HCT116 (cell line): ENCODE measurements at regions of chr9 and their contacts with region 1.

Region 1: GRCh38 chr9:35923927-35924763 is 14.9 kb downstream of the SPAAR start:
- DNase-seq: peak; percentile 44
- ATAC-seq: peak; percentile 88
- H3K4me3 ChIP-seq: peak overlapping the region in 1 of 2 experiments; percentile 31; a peak in 2 of 4 replicates
- H3K27ac ChIP-seq: peak overlapping the region; percentile 46; the same call in 1 of the 2 replicates
- H3K4me1 ChIP-seq: peaks cover 14 to 20% of the 10 kb centered on the region in 2 experiments
- H3K27me3 ChIP-seq: no peaks in the 10 kb centered on the region
- CTCF ChIP-seq: no peak
- POLR2A ChIP-seq: no peak
- RAD21 ChIP-seq: no peak

Region 2: DNA sequence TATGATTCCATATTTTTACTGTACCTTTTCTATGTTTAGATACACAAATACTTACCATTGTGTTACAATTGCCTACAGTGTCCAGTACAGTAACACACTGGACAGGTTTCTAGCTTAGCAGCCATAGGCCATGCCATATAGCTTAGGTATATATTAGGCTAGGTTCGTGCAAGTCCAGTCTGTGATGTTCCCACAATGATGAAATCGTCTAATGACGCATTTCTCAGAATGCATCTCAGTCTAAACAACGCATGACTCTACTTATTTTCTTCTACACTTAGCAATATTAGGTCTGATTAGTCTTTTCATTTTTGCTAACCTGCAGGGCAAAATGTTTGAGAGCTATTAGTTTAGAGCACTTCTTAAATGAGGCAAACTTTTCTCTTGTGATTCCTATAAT is 11.1 kb after region 1 on chr9:
- CTCF ChIA-PET with region 1: no interaction called
- POLR2A ChIA-PET with region 1: no interaction called
- RAD21 ChIA-PET with region 1: no interaction called
- intact Hi-C with region 1: no loop called
- DNase-seq: no peak
- ATAC-seq: no peak
- H3K4me3 ChIP-seq: no peak overlapping the region
- H3K27ac ChIP-seq: no peak overlapping the region
- H3K4me1 ChIP-seq: no peaks in the 10 kb centered on the region
- H3K27me3 ChIP-seq: no peaks in the 10 kb centered on the region
- CTCF ChIP-seq: no peak
- POLR2A ChIP-seq: no peak
- RAD21 ChIP-seq: no peak

Region 3: DNA sequence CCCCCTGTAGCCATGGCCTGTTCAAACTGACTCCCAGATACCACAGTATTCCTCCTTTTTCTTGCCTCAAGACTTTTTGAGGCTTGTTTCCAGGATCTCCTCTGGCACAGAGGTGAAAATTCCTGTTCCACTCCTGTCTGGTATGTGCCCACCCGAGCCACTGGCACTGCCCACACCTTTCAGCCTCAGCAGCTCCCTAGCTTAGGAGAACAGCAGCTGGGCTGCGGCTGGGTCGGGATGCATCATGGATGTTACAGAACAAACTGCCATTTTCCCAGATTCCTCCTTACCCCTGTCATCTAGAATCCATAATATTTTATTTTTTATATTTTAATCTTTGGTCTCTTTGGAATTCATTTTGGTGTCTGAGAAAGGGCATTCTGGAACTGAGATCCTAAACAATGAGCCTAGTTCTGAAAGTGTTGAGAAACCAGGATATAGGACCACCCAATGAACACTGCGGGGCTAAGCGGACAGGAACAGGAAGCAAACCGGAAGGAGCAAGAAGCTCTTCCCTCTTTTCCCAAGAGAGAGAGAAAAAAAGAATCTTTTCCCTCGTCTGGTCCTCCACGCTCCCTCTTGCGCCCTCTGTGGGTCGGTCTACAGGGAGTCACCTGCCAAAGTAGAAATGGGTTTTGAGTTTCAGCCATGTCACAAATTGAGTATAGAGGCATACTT is 21.3 kb after region 1 on chr9:
- CTCF ChIA-PET with region 1: interaction called, 12 read pairs
- POLR2A ChIA-PET with region 1: interaction called, 3 read pairs
- RAD21 ChIA-PET with region 1: no interaction called
- intact Hi-C with region 1: no loop called
- DNase-seq: peak; percentile 81
- ATAC-seq: peak; percentile 89
- H3K4me3 ChIP-seq: peak overlapping the region; percentile 54 to 61
- H3K27ac ChIP-seq: peak overlapping the region; percentile 0; the same call in 1 of the 2 replicates
- H3K4me1 ChIP-seq: peaks cover 9 to 27% of the 10 kb centered on the region in 2 experiments; a peak in 3 of 4 replicates
- H3K27me3 ChIP-seq: no peaks in the 10 kb centered on the region
- CTCF ChIP-seq: peak; percentile 84 to 96 (median 88)
- POLR2A ChIP-seq: peak; percentile 20
- RAD21 ChIP-seq: peak; percentile 63